PC-3 (cell line): ENCODE measurements at regions of chr7 and their contacts with region 1.

Region 1: GRCh38 chr7:131100357-131101054 is 227.2 kb upstream of the MKLN1 start:
- DNase-seq: no peak
- ATAC-seq: no peak
- H3K4me3 ChIP-seq: no peak overlapping the region
- H3K27ac ChIP-seq: no peak overlapping the region
- H3K4me1 ChIP-seq: peaks cover 7% of the 10 kb centered on the region
- H3K27me3 ChIP-seq: no peaks in the 10 kb centered on the region
- CTCF ChIP-seq: no peak

Region 2: GRCh38 chr7:130888468-130888867 is 212.0 kb before region 1 on chr7:
- CTCF ChIA-PET with region 1: no interaction called
- POLR2A ChIA-PET with region 1: interaction called, 11 read pairs
- intact Hi-C with region 1: no loop called
- DNase-seq: no peak
- ATAC-seq: no peak
- H3K4me3 ChIP-seq: no peak overlapping the region
- H3K27ac ChIP-seq: peak overlapping the region; percentile 80
- H3K4me1 ChIP-seq: peaks cover 79% of the 10 kb centered on the region
- H3K27me3 ChIP-seq: no peaks in the 10 kb centered on the region
- CTCF ChIP-seq: no peak

Region 3: DNA sequence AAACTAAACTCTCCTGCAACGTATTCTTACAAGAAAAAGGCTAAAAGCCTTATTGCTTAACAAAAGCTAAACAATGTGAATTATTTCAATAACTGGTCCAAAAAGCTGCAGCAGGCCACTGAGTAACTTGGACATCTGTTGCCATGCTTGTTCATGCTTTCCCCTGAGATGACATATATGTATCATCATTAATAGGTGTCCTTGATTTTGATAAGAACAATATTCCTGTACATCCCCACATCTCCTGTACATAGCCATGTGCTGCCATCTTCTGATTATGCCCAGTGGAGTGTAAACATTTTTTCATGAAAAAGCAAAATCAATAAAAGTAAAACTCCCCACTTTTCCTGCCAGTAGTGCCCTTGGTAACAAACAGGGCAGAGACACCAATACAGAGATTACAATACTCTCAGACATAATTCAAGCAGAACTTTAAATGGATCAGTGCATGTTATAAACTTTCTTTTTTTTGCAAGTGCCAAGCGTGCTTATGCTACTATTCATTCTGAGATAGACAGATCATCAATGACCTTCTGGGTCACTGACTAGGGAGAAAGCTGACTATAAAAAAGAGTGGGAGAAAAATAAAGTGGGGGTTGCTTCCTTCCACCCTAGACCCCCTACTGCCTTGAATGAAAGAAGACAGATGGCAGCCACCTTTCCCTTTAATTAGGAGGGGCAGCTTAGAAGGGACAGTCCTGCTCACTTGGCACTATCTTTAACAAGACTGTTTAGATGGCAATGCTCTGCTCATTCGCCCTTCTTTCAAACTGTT is 161.0 kb before region 1 on chr7:
- CTCF ChIA-PET with region 1: no interaction called
- POLR2A ChIA-PET with region 1: no interaction called
- intact Hi-C with region 1: no loop called
- DNase-seq: peak; percentile 24
- ATAC-seq: peak; percentile 11
- H3K4me3 ChIP-seq: peak overlapping the region; percentile 80
- H3K27ac ChIP-seq: peak overlapping the region; percentile 87
- H3K4me1 ChIP-seq: peaks cover 45% of the 10 kb centered on the region
- H3K27me3 ChIP-seq: no peaks in the 10 kb centered on the region
- CTCF ChIP-seq: no peak; the same call in 1 of the 2 replicates